ENCODE measurements at regions of chr2 and their contacts with region 1.

Region 1: DNA sequence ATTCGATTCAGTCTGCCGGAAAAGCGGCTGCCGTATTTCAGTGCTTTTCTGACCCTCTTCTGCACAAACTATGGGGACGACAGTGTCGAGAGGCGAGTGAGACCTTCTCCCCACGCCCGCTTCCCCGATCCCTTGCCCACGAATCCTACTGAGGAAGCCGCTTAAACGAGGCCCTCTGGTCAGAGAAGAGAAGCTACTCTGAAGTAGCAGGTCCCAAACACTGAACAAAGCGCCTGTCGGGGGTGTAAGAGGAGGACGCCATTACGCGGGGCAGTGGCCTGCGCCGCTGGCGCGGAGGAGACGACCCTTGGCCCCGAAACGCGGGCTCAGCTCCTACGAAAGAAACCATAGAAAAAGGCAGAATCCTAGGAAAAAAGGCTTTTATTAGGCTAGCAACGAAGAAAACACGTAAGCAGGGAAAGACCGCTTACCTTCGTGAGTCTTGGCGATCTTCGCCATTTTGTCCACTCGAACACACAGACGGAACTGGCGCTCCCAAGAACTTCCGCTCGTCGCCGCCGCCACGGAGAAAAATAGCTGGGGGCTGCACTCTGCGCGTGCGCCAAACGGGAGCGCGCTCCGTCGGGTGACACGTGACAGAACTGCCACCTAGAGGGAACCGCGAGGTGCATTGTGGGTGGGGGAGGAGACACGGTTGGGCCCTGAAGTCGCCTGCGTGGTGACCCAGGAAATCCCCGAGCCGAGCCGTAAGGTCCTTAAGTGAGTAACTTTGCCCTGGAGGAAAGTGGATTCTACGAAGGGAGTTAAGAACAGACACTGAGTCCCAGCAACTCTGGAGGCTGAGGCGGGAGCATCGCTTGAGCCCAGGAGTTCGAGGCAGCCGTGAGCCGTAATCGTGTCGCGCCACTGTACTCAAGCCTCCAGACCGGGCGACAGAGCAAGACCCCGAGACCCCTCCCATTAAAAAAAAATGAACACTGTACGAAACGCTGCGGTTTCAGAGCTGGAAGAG is at the start of gene SF3B1:
- DNase-seq: peak; percentile 98
- ATAC-seq: peak; percentile 94
- H3K4me3 ChIP-seq: peak within 1 kb of the TSS; percentile 90
- H3K27ac ChIP-seq: peak within 1 kb of the TSS; percentile 97
- H3K4me1 ChIP-seq: peaks cover 7% of the 10 kb centered on the region
- H3K27me3 ChIP-seq: no peaks in the 10 kb centered on the region
- CTCF ChIP-seq: no peak
- POLR2A ChIP-seq: peak; percentile 97
- RAD21 ChIP-seq: no peak
- total RNA-seq, gene SF3B1: 706 and 942 TPM in 2 replicates

Region 2: DNA sequence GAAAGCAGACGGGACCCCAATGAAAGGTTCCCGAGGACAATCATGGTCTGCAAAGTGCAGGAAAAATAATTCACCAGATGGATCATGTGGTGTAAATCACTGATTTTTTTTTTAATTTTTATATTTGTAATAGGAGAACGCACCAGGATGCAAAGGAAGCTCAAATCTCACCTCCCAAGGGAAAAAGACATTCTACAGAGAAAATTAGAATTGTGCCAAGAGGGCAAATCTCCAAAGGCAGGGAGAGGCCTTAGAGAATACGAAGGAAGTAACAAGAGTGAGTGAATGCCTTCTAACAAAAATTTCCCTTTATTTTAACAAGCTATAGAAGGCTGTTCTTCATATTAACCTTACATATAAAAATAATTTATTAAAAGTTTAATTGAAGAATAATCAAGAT is 215.2 kb before region 1 on chr2:
- CTCF ChIA-PET with region 1: no interaction called
- POLR2A ChIA-PET with region 1: no interaction called
- dilution Hi-C with region 1: no loop called
- in situ Hi-C with region 1: no loop called
- intact Hi-C with region 1: no loop called
- DNase-seq: no peak
- ATAC-seq: no peak
- H3K4me3 ChIP-seq: no peak overlapping the region
- H3K27ac ChIP-seq: no peak overlapping the region
- H3K4me1 ChIP-seq: peaks cover 5% of the 10 kb centered on the region
- H3K27me3 ChIP-seq: no peaks in the 10 kb centered on the region
- CTCF ChIP-seq: no peak
- POLR2A ChIP-seq: no peak
- RAD21 ChIP-seq: no peak

Region 3: DNA sequence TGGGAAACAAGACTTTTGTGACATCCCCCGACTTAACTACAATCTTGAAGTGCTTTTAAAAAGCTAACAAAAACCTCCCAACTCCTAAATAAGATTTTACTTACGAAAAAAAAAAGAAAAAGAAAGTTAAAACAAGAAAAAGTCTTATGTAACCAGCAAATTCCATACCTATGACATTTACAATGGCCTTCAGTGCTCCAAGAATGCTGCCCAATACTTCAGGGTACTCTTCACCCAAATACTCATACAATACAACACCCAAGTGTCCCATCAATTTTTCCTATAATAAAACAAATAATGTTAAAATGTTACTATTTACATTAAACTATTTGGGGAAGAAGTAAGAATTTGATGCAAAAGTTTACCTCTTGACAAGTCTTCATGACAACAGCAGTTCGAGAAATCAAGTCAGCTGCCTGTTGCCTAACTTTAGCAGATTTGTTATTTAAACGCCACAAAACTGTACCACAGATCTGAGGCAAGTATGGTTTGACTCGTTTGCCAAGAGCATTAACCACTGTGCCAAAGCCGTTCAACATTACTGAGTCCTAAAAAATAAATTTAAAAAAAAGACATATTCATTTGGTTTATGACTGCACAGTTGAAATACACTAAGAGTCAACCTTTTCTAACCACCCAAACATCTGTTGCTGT is 34.8 kb before region 1 on chr2:
- CTCF ChIA-PET with region 1: no interaction called
- POLR2A ChIA-PET with region 1: no interaction called
- dilution Hi-C with region 1: no loop called
- in situ Hi-C with region 1: no loop called
- intact Hi-C with region 1: no loop called
- DNase-seq: peak; percentile 20
- ATAC-seq: no peak
- H3K4me3 ChIP-seq: no peak overlapping the region
- H3K27ac ChIP-seq: no peak overlapping the region
- H3K4me1 ChIP-seq: no peaks in the 10 kb centered on the region; the same call in 1 of the 2 replicates
- H3K27me3 ChIP-seq: no peaks in the 10 kb centered on the region
- CTCF ChIP-seq: no peak
- POLR2A ChIP-seq: no peak
- RAD21 ChIP-seq: no peak

Region 4: GRCh38 chr2:197453161-197453914 is 18.5 kb after region 1 on chr2 and contains the start of gene COQ10B:
- CTCF ChIA-PET with region 1: no interaction called
- POLR2A ChIA-PET with region 1: interaction called, 10 read pairs
- dilution Hi-C with region 1: no loop called
- in situ Hi-C with region 1: no loop called
- intact Hi-C with region 1: loop called (anchors 1 kb)
- DNase-seq: peak; percentile 100
- ATAC-seq: peak; percentile 96
- H3K4me3 ChIP-seq: peak within 1 kb of the TSS; percentile 70
- H3K27ac ChIP-seq: peak within 1 kb of the TSS; percentile 92
- H3K4me1 ChIP-seq: no peaks in the 10 kb centered on the region
- H3K27me3 ChIP-seq: no peaks in the 10 kb centered on the region
- CTCF ChIP-seq: peak; percentile 37
- POLR2A ChIP-seq: peak; percentile 98
- RAD21 ChIP-seq: no peak
- total RNA-seq, gene COQ10B: 28.7 and 64.2 TPM in 2 replicates